ENCODE measurements at regions of chr4 and their contacts with region 1.

Region 1: DNA sequence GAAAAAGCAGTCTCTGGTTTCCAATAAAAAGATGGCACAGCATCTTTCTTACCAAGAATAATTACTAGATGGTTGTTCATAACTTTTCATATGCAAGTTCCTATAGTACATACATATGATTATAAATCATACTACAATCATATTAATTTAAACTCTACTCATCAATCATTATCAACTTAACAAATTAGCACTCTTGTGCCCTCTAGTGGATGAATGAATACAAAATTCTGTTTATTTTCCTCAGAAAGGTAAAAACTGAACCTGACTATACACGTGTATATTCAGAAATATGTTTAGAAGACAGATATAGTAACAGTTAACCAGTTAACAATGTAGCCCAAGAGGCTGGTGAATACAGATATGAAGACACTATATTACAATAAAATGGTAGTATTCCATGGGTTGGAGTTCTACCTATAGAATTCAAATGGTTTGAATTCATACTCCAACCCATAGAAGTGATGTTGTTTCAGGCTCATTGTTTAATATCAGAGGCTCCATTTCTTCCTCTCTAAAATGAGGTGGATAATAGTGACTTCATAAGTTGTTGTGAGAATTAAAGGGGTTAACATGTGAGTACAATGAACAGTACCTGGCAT is 100.0 kb downstream of the ADAMTS3 start:
- DNase-seq: no peak
- ATAC-seq: no peak

Region 2: GRCh38 chr4:71584585-71584984 is 884.4 kb before region 1 on chr4:
- intact Hi-C with region 1: no loop called
- DNase-seq: no peak
- ATAC-seq: no peak

Region 3: DNA sequence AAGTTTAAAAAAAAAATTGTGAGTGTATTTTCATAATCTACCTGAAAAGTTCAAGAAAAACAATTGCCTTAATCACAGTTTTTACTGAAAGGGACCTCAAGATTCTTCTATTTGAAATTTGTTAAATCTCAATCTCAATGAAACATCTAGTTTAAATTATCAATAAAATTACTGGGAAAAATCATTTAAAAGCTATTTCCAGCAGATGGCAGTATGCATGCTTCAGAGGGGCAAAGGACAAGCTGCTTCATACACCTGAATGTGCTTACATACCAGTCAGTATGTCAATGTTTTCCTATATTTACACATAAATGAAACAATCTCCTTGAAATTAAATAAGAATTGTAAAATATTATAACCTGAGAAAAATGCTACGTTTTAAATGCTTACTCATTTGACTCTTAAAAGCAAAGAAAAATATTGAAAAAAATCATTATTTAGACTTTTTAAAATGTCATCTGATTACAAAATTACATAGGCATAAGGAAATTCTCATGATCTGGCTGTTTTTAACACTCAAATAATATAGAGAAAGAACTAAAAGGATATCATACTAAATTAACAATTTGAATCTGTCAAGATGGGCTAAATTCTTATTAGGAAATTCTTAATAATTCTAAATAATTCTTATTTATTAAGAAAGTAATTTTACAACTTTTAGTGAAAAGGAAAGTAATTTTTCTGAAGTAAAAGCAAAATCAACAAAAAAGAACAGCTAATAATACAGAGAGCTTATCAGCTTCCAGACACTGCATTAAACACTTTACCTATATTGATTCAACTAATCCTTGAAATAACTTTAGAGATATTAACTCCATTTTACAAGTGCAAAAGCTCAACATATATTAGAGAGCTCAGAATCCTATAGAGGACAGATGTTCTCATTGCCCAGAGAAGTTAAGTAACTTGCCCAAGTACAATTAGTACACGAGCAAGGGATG is 142.0 kb before region 1 on chr4:
- intact Hi-C with region 1: loop called (anchors 2 to 5 kb)
- DNase-seq: no peak
- ATAC-seq: no peak

Region 4: GRCh38 chr4:72390409-72390808 is 78.6 kb before region 1 on chr4:
- intact Hi-C with region 1: no loop called
- DNase-seq: no peak
- ATAC-seq: peak in 1 of 2 donors; percentile 64